Posterior cingulate gyrus (tissue), 11 donors: ENCODE measurements at regions of chr3 and their contacts with region 1.

Region 1: DNA sequence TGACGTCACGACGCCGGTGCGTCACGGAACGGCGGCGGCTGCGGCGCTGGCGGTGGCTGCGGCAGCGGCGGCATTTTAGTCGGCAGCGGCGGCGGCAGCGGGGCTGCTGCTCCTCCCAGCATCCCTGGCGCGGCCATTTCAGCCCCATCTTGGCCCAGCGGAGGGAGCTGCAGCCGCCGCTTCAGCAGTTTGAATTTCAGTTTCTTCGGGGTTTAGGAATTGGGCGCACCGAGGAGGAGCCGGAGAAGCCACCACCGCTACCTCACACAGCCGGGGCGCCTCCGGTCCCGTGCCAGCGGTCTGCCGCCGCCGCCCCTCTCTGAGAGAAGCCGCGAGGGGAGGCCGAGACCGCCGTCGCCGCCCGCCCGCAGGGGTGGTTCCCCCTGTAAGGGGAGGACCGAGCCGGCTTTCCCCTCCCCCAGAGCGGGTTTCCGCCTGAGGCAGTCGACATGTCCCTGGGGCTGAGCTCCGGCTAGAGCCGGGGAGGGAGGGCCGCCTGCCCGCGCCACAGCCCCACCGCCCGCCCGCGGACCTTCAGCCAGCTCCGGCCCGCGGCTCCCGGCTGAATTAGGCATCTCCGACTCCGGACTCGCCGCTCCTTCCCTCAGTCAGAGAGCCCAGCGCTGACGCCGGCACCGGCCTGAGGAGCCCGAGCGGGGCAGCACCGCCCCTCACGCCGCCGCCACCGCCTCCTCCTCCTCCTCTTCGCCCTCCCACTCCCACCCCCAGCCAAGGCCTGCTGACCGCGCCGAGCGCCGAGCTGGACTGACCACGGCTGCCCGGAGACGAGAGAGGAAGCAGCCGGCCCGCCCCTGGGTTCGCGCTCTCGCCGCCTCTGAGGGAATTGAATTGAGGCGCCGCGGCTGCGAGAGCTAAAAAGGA is at the start of gene TSC22D2:
- DNase-seq: peak; percentile 94 to 100 (median 97)

Region 2: DNA sequence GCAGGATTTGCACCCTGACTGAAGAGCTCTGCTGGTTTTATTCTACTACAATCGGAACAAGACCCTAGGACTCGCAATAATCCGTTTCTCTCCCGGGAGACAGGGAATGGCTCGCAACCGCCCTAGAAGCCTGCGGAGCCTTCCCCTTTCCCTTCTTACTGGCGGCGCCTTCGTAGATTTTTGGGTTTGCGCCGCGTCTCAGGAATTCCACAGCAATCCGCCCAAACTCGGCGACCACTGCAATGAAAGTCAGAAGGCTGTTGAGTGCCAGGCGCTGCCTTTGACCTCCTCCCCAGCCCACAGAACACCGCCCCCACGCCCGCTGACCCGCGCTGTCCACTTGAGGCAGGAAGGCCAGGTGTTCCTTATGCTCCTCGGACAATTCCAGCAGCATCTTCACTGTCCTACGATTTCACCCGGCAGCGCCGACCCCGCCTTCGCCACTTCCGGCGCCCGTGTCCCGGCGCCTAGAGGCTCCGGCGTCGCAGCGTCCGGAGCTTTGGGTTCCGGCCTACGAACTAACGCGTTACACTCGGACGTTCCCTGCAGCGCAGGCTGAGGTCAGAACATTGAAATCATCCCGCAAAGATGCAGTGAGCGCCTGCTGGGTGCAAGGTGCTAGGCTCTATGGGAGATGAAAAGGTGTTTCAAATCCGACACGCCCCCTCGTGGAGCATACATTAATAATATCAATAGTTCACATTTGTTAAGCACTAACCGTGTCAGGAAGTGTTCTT is 656.2 kb before region 1 on chr3 and contains the start of gene COMMD2:
- intact Hi-C with region 1: loop called (anchors 10 kb)
- DNase-seq: peak; percentile 61 to 95 (median 73)

Region 3: DNA sequence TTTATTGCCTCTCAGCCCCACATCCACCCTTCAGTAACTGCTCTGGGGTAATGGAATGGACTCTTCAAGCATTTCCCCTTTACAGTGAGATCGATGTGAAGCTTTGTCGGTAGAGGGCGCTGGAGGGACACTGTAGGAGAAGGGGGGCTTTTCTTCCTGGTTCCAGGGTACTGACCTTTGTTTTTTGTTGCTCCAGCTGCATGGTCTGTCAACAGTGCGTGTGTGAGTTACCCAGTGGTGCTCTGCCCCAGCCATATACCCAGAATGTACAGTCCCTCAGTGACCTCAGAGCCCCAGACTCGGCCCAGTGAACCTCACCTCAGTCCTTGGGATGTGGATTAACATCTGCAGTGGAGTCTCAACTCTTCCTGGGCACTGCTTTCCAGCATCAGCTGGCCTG is 180.6 kb before region 1 on chr3:
- intact Hi-C with region 1: loop called (anchors 5 kb)
- DNase-seq: peak in 6 of 10 donors; percentile 26 to 86 (median 54)

Region 4: DNA sequence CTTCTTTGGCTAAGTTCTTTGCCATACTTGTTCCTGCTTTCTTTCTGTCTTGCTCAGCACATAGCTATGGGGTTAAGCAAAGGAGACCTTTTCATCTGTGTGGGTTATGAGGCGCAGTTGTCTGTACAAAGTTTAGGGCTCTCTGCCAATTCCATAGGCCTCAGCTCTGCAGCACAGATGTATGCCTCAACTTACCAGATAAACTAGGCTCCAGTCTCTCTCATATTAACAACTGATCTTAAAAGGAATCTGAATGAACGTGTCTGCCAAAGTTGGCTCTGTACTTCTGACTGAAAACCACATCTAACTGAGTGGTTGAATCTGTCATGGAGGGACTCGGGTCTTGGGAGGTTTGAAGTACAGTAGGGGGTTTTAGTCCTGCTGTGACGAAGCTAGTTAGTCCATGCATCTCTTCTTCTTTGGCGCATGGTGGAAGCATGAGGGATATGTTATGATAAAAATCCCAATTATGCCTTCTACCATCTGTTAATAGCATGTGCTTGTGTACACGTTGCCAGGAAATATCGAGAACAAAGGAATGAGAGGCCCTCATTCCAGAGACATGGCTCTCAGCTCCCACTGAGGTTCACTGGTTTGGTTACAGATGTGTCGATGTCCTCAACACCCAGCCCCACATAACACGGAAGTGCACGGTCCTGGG is 114.9 kb before region 1 on chr3:
- intact Hi-C with region 1: no loop called
- DNase-seq: no peak

Region 5: GRCh38 chr3:150495563-150496168 is 87.2 kb after region 1 on chr3:
- intact Hi-C with region 1: loop called (anchors 1 kb)
- DNase-seq: no peak

Region 6: GRCh38 chr3:150763122-150763841 is 354.8 kb after region 1 on chr3 and contains the start of gene SIAH2:
- intact Hi-C with region 1: loop called (anchors 5 kb)
- DNase-seq: peak; percentile 83 to 99 (median 89)